Left ventricle myocardium inferior (tissue), 1 donor: ENCODE measurements at regions of chr6 and their contacts with region 1.

Region 1: DNA sequence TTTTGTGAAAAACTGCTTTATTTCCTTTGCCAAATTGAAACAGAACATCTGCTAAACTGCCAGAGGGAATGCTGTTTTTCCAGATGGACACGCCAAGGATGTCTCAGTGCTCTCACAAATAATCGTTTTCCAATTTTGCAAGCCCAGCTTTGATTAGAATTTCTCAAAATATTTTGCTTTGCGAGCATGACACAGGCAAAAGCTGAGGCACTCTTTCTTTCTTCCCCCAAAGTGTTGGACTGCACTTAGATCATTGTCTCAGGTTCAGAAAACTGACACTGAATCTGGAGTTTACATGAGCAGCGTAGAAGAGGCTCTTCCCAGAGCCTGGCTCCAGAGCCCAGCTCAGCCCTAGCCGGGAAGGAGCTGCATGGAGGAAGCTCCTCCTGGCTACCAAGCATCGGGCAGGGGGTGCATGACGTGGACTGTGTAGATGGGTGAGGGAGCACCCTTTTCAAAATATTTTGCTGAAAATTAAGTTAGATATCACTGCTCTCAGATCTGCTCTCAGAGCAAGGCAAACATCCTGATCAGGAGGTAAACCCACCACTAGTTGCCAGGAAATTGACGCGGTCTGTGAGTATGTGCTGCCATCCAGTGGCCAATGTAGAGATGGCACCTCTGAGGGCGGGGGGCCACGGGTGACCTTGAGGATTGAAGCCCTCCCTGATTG is 107.5 kb downstream of the SLC22A3 start:
- DNase-seq: peak; percentile 45
- H3K4me3 ChIP-seq: peak overlapping the region; percentile 35
- H3K27ac ChIP-seq: peak overlapping the region; percentile 63
- H3K4me1 ChIP-seq: peaks cover 7% of the 10 kb centered on the region
- H3K27me3 ChIP-seq: no peaks in the 10 kb centered on the region
- CTCF ChIP-seq: peak; percentile 95

Region 2: DNA sequence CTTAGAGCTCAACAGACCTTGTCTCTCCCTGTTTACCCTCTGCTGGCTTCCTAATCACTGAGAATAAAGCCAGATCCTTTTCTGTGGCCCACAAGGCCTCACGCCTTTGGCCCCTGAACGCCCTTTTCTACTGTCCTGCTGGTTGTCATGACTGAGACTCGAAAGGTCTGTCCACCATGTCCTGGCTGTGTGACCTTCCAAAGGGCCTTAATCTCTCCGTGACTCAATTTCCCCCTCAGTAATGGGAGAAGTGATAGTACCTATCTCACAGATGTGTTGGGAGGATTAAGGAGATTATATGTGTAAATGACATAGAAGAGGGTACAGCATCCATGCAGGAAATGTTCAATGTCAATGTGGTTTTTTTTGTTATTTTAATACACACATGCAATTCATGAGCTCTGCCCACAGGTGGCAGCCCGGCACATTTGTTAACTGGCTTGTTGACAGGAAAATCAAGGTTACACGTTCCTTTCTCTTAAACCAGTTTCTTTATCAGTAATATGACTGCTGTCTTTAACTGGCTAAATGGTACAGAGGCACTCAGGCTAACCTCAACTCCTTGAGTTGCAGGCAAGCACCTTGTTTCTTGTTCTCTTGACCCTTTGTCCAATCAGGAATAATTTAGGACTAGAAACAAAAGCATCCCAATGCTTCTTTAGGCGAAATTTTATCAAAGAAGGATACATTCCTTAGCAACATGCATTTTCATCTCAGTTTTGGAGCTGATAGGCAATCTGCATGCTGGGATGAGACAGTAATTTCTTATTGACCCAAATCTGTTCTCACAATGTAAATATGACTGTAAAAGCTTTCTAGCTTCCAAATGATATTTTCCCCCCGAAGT is 317.5 kb before region 1 on chr6:
- intact Hi-C with region 1: loop called (anchors 10 kb)
- DNase-seq: no peak
- H3K4me3 ChIP-seq: no peak overlapping the region
- H3K27ac ChIP-seq: no peak overlapping the region
- H3K4me1 ChIP-seq: peaks cover 5% of the 10 kb centered on the region
- H3K27me3 ChIP-seq: no peaks in the 10 kb centered on the region
- CTCF ChIP-seq: peak; percentile 78